ENCODE measurements at regions of chr14 and their contacts with region 1.

Region 1: DNA sequence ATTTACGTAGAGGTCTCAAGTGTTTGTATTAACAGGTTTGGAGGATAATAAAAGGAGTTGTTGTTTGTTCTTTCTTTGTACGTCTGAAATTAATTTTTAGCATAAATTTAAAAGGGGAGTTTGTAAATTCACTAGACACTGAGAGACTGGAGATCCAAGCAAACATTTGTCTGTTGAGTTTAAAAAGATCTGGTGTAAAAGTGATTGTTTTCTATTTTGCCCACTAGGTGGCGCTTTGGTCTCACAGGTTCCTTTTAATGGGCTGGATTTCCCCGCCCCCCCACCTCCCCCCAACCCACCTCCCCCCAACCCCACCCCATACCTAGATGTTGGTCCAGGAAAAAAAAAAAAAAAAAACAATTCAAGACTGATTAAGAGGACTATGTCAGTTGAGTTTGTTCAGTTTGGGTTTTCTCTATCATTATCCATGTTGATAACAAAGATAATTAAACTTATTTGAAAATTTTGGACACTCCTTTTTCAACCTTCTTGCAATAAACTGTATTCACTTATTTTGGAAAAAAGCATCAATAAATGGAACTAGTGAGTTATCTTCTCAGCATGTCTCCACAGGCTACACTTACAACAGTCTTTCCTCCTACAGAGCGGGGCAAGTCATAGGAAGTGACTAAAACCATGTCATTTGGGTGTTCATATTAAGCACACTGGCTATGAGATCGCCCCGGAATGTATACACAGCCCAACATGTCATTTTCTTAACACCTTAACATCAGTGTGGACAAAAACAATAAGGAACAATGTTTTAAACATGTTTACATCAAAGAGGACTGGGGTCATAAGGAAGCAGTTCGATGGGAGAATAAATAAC is 841.1 kb downstream of the NRXN3 start:
- DNase-seq: peak in 1 of 2 experiments; percentile 38
- H3K4me3 ChIP-seq: no peak overlapping the region
- H3K4me3 Mint-ChIP-seq: no peak overlapping the region
- H3K27ac Mint-ChIP-seq: no peak overlapping the region
- H3K4me1 ChIP-seq: peaks cover 4% of the 10 kb centered on the region
- H3K4me1 Mint-ChIP-seq: no peaks in the 10 kb centered on the region
- H3K27me3 ChIP-seq: no peaks in the 10 kb centered on the region
- H3K27me3 Mint-ChIP-seq: no peaks in the 10 kb centered on the region
- CTCF ChIP-seq: peak; percentile 54 to 55

Region 2: DNA sequence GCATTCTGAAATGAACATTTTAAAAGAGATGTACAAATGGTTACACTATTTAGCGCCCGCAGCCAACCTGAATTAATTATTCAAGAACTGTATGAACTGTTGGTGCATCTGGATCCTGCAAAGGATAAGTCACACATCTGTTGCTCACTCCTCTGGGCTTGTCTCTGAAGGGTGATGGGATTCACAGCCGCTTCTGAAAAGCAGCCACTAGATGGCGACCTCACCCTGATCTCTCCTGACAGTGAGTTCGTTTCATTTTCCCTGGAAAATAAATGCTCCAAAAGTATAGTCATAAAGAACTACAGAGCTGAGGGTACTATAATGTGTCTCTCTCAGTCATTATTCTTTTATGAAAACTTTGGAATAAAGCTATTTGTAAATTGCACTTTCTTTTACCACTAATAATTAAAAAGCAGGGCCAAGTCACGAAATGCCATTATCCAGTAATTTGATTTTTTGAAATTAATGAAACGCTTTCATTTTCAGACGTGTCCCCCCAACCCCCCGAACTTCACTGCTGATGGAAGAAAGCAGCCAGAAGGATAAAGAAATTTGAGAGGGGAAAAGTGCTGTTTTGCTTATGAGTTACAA is 51.5 kb before region 1 on chr14:
- CTCF ChIA-PET with region 1: no interaction called
- POLR2A ChIA-PET with region 1: no interaction called
- intact Hi-C with region 1: no loop called
- DNase-seq: peak; percentile 54 to 68
- H3K4me3 ChIP-seq: no peak overlapping the region
- H3K4me3 Mint-ChIP-seq: no peak overlapping the region
- H3K27ac Mint-ChIP-seq: no peak overlapping the region
- H3K4me1 ChIP-seq: no peaks in the 10 kb centered on the region
- H3K4me1 Mint-ChIP-seq: no peaks in the 10 kb centered on the region
- H3K27me3 ChIP-seq: no peaks in the 10 kb centered on the region
- H3K27me3 Mint-ChIP-seq: peaks cover 16% of the 10 kb centered on the region
- CTCF ChIP-seq: peak; percentile 77 to 89

Region 3: DNA sequence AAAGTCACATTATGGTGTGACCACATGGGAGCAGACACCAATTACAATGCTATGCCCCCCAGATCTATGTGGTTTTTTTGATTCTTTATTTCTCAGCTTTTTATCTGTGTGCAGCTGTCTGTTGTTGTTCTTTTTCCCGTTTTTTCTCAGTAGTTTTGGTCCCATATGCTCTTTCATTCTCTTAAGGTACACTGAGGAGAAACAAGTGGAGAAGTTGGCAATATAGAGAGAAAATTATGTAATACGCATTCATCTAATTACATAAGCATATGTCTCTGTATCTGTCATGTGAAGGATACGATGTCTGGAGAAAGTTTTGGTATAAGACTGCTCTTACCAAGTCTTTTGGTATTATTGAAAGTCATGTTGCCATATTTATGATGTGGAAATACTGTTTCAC is 22.1 kb before region 1 on chr14:
- CTCF ChIA-PET with region 1: interaction called, 11 read pairs
- POLR2A ChIA-PET with region 1: no interaction called
- intact Hi-C with region 1: no loop called
- DNase-seq: no peak
- H3K4me3 ChIP-seq: no peak overlapping the region
- H3K4me3 Mint-ChIP-seq: no peak overlapping the region
- H3K27ac Mint-ChIP-seq: no peak overlapping the region
- H3K4me1 ChIP-seq: no peaks in the 10 kb centered on the region
- H3K4me1 Mint-ChIP-seq: no peaks in the 10 kb centered on the region
- H3K27me3 ChIP-seq: no peaks in the 10 kb centered on the region
- H3K27me3 Mint-ChIP-seq: peaks cover 9% of the 10 kb centered on the region
- CTCF ChIP-seq: no peak

Region 4: DNA sequence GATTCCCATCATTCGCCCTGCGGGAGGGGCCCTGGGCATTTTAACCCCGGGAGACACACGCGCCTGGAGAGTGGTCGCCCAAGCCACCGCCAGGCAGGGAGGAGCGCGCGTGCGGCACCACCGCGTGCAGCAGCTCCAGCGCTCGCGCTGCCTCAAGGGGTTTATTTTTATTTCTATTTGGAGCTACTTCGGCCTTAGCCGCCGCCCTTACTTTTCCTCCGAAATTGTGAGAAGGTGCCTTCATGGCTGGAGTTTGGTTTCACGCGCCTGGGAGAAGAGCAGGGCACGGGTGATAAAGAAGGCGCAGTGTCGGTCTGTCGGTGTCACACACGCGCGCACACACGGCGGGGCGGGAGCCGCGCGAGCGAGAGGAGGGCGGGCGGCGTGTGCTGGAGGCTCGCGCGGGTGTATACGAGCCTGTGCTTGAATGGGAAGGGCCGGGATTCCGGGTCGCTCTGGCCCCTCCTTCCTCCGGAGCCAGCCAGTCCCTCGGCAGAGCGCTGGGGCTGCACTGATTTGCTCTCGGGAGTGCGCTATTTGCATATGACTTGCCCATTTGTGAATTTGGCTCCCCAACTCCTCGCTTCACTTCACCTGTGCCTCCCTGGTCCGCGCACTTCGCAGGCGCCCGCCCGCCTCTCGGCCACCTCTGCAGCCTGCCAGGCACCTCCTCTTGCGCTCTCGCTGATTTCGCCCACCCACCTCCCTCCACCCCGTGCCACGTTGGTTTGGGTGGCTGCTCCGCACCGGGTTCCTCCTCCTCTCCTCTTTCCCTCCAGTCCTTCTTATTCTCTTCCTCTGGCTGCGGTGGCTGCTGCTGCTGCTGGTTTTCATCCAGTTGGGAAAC is 267.7 kb after region 1 on chr14:
- CTCF ChIA-PET with region 1: no interaction called
- POLR2A ChIA-PET with region 1: no interaction called
- intact Hi-C with region 1: loop called (anchors 10 kb)
- DNase-seq: peak; percentile 93 to 95
- H3K4me3 ChIP-seq: peak overlapping the region; percentile 75
- H3K4me3 Mint-ChIP-seq: peak overlapping the region; percentile 95
- H3K27ac Mint-ChIP-seq: peak overlapping the region; percentile 78
- H3K4me1 ChIP-seq: peaks cover 11% of the 10 kb centered on the region
- H3K4me1 Mint-ChIP-seq: peaks cover 28% of the 10 kb centered on the region
- H3K27me3 ChIP-seq: no peaks in the 10 kb centered on the region
- H3K27me3 Mint-ChIP-seq: peaks cover 4% of the 10 kb centered on the region
- CTCF ChIP-seq: no peak

Region 5: GRCh38 chr14:79356040-79356439 is 344.7 kb after region 1 on chr14:
- CTCF ChIA-PET with region 1: no interaction called
- POLR2A ChIA-PET with region 1: no interaction called
- intact Hi-C with region 1: loop called (anchors 10 kb)
- DNase-seq: no peak
- H3K4me3 ChIP-seq: no peak overlapping the region
- H3K4me3 Mint-ChIP-seq: no peak overlapping the region
- H3K27ac Mint-ChIP-seq: no peak overlapping the region
- H3K4me1 ChIP-seq: peaks cover 39% of the 10 kb centered on the region
- H3K4me1 Mint-ChIP-seq: peaks cover 26% of the 10 kb centered on the region
- H3K27me3 ChIP-seq: no peaks in the 10 kb centered on the region
- H3K27me3 Mint-ChIP-seq: no peaks in the 10 kb centered on the region
- CTCF ChIP-seq: peak in 1 of 2 experiments; percentile 8

Region 6: DNA sequence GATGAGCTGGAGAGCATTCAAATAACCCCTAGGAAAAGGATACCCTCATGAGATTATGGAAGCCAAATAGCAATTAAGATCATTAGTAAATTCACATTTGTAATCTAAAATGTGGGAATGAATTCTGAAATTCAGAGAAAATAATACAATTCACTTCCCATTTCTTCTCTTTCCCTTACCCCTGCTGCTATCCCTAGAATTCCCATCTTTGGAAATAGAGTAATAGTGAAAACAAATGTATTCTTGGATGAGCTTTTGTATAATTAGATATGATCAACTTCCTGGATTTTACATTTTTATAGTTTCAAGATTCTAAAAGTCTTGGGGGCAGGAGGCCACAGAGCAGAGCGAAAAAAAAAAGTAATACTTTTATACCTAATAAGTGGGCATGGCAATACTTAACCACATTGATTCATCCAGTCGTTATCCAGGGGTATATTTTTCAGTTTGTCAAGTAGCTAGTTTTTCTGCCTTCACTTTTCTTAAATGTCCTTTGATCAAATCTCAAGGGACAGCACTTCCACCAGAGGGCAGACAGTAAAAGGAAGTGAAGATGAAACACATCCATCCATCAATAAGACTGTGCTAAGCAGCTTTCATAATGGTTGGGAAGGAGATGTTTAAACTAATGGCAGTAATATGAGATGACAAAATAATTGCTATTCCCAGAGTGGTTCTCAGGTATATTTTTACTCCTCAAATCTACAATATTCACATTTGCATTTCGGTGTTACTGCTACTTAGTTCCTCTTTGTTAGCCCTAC is 798.7 kb after region 1 on chr14:
- CTCF ChIA-PET with region 1: no interaction called
- POLR2A ChIA-PET with region 1: no interaction called
- intact Hi-C with region 1: loop called (anchors 5 kb)
- DNase-seq: peak; percentile 33 to 38
- H3K4me3 ChIP-seq: no peak overlapping the region
- H3K4me3 Mint-ChIP-seq: no peak overlapping the region
- H3K27ac Mint-ChIP-seq: no peak overlapping the region
- H3K4me1 ChIP-seq: no peaks in the 10 kb centered on the region
- H3K4me1 Mint-ChIP-seq: no peaks in the 10 kb centered on the region
- H3K27me3 ChIP-seq: no peaks in the 10 kb centered on the region
- H3K27me3 Mint-ChIP-seq: no peaks in the 10 kb centered on the region
- CTCF ChIP-seq: peak; percentile 48 to 53

Region 7: DNA sequence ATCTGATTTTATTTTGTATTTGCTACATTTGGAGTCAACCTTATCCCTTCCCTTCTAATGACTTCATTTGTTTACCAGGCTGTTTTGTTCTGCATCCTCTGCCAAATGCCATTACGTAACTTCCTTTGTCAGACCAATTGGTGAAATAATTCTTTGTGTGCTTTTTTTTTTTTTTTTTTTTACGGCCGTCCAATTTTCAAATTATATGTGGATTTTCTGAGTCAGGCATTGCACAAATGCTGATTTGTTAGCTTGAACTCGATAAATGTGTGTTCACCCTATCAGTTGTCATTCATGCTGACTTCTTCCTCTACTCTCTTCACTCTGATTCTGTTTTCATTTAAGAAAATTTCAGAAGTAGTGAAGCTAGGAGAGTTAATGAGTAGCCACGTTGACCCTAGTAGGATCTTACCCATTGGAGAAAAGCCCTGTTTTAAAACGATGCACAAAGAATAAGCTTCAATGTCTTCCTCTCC is 813.8 kb after region 1 on chr14:
- CTCF ChIA-PET with region 1: no interaction called
- POLR2A ChIA-PET with region 1: interaction called, 12 read pairs
- intact Hi-C with region 1: no loop called
- DNase-seq: no peak
- H3K4me3 ChIP-seq: no peak overlapping the region
- H3K4me3 Mint-ChIP-seq: no peak overlapping the region
- H3K27ac Mint-ChIP-seq: no peak overlapping the region
- H3K4me1 ChIP-seq: no peaks in the 10 kb centered on the region
- H3K4me1 Mint-ChIP-seq: peaks cover 16% of the 10 kb centered on the region
- H3K27me3 ChIP-seq: no peaks in the 10 kb centered on the region
- H3K27me3 Mint-ChIP-seq: no peaks in the 10 kb centered on the region
- CTCF ChIP-seq: no peak